Left cardiac atrium (tissue), 4 donors: ENCODE measurements at regions of chr2 and their contacts with region 1.

Region 1: DNA sequence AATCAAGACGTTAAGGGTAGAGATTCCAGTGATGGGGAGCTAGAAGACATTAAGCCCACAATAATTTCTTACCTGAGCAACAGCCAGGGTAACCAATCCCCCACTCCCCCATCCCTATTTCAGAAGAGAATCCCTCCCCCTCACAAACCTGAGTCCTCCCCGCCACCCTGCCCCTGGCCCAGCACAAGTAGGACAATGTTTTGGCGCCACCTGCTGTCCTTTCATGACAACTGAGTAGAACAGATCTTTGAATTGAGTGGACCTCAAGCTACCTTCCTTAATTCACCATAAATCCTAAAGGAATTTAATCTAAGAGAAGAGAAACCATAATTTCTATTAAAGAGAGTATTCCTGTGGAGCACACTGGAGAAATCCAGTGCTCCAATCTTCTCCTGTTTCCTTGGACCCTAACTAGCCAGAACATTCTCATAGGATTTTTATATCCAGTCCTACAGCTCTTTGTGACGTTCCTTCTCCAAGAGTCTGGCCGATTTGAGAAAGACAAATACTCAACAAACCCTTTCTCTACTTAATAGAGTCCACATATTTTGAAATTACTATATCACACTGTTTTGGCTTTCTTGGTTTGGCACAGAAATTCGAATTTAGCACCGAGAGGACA is 41.1 kb downstream of the NHEJ1 start:
- DNase-seq: peak; percentile 71
- ATAC-seq: peak; percentile 47 to 71

Region 2: GRCh38 chr2:219029829-219030165 is 89.7 kb before region 1 on chr2:
- intact Hi-C with region 1: loop called in 1 of 2 experiments (anchors 1 kb)
- DNase-seq: peak; percentile 81
- ATAC-seq: peak; percentile 83 to 89

Region 3: DNA sequence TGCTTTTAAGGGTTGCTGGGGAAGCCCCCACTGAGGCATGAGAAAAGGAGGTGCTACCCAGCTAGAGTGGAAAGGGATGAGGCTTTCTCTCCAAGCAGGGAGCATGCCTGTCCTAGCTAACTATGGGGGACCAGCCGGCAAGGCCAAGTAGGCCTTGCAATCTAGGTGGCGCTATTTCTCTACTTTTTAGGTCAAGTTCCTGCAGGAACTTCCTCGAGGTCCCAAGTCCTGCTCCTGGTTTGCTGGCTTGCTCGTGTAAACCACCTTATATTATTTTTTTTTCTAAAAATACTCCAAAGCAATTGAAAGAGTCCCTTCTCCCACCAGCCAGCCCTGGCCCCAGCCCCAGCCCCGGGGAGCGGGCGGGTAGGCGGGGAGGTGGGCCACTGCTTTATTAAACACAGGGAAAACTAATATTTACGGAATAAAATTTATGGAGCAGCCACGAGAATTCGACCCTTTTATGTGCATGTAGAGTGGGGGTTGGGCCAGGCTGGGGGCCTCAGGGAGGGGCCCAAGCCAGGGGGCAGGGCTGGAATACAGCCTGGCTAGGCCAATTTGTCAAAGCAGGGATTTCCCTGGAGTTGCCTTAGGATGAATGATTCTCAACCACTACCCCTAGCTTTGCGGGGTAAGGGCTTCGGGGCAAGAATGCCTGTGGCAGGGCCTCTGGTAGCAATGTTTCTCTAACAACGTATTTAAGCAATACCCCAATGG is 46.0 kb before region 1 on chr2:
- intact Hi-C with region 1: loop called (anchors 5 kb)
- DNase-seq: no peak
- ATAC-seq: peak in 1 of 2 donors; percentile 14

Region 4: DNA sequence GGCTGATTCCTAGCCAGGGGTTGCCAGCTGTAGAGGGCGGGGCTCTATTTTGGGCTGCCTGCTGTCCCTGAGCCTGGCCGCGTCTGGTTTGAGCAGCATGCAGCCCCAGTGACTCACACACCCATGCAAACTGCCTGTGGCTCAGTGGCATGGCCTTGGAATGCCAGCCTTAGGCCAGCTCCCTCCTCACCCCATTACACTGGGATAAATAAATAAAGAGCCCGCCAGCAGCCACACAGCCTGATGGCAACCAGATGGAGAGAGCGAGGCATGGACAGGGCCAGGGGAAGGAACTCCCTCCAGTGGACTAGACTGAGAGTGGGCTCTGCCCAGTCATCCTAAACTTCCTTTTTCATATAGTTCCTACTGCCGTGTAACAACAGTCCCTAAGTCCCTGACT is 22.8 kb after region 1 on chr2:
- intact Hi-C with region 1: no loop called
- DNase-seq: no peak
- ATAC-seq: no peak